Activated B cell treated with CpG ODN at 0.5 μM for 24 hours (primary cell): ENCODE measurements at regions of chr12 and their contacts with region 1.

Region 1: DNA sequence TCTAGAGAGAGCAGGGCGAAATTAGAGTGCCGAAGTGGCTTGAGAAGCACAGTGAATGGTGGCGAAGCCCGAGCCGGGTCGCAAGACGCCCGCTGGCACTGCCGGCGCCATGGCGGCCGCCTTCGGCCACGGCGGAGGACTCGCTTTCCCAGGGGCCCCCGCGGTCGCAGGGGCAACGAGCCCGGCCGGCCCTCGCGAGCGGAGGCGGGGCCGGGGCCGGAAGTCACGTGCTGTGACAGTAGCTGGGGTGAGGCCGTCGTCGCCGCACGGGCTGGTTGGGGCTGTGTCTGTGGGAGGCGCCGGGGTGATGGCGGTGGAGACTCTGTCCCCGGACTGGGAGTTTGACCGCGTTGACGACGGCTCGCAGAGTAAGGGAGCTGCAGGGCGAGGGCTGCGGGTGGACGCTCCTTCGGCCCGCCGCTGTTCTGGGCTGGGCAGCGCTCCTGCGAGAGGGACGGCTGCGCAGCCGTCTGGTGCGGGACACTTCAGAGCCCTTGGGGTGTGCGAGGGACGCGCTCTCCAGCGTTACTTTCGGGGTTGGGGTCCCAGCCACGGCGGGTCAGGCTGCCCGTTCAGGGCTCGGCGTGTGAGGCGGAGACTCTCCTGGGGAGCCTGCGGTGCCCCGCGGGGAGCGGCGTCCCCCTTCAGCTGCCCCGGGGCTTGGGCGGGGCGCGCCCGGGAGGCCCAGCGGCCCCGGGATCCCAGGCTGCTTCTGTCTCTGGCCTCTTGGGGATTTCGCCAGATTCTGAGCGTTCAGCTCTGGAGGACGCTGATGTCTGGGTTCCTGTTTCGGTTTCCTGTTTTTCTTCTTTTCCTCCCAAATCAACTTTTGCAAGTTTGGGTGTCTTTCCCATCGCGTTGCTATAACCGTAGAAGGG is at the start of gene WASHC4:
- DNase-seq: peak; percentile 95
- ATAC-seq: peak; percentile 89
- H3K4me3 Mint-ChIP-seq: peak within 1 kb of the TSS; percentile 96
- H3K27ac Mint-ChIP-seq: peak within 1 kb of the TSS; percentile 96
- H3K4me1 Mint-ChIP-seq: peaks cover 33% of the 10 kb centered on the region
- H3K27me3 Mint-ChIP-seq: no peaks in the 10 kb centered on the region
- CTCF ChIP-seq: no peak
- total RNA-seq, gene WASHC4: 105 and 128 TPM in 2 replicates

Region 2: DNA sequence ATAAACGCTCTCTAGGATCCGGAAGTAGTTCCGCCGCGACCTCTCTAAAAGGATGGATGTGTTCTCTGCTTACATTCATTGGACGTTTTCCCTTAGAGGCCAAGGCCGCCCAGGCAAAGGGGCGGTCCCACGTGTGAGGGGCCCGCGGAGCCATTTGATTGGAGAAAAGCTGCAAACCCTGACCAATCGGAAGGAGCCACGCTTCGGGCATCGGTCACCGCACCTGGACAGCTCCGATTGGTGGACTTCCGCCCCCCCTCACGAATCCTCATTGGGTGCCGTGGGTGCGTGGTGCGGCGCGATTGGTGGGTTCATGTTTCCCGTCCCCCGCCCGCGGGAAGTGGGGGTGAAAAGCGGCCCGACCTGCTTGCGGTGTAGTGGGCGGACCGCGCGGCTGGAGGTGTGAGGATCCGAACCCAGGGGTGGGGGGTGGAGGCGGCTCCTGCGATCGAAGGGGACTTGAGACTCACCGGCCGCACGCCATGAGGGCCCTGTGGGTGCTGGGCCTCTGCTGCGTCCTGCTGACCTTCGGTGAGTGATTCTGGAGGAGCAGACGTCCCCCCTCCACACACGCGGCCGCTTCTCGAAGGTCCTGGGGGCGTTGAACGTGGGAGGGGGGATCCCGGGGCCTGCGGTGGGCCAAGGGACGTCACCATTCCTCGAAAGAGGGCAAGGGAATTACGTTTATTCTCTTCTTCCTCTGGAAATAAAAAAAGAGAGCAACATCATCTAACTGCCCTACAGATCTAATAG is 1177.5 kb before region 1 on chr12 and contains the start of gene HSP90B1:
- CTCF ChIA-PET with region 1: no interaction called
- POLR2A ChIA-PET with region 1: interaction called, 23 read pairs
- intact Hi-C with region 1: loop called (anchors 1 kb)
- DNase-seq: peak; percentile 95
- ATAC-seq: peak; percentile 69
- H3K4me3 Mint-ChIP-seq: peak within 1 kb of the TSS; percentile 89
- H3K27ac Mint-ChIP-seq: peak within 1 kb of the TSS; percentile 97
- H3K4me1 Mint-ChIP-seq: peaks cover 68% of the 10 kb centered on the region
- H3K27me3 Mint-ChIP-seq: no peaks in the 10 kb centered on the region
- CTCF ChIP-seq: no peak
- total RNA-seq, gene HSP90B1: 346 and 368 TPM in 2 replicates

Region 3: GRCh38 chr12:104215638-104216297 is 892.0 kb before region 1 on chr12 and contains the start of gene TXNRD1:
- CTCF ChIA-PET with region 1: no interaction called
- POLR2A ChIA-PET with region 1: no interaction called
- intact Hi-C with region 1: loop called (anchors 5 kb)
- DNase-seq: peak; percentile 82
- ATAC-seq: peak; percentile 93
- H3K4me3 Mint-ChIP-seq: peak within 1 kb of the TSS; percentile 79
- H3K27ac Mint-ChIP-seq: peak within 1 kb of the TSS; percentile 65
- H3K4me1 Mint-ChIP-seq: peaks cover 21% of the 10 kb centered on the region
- H3K27me3 Mint-ChIP-seq: peaks cover 6% of the 10 kb centered on the region
- CTCF ChIP-seq: no peak
- total RNA-seq, gene TXNRD1: 72.0 and 77.3 TPM in 2 replicates

Region 4: GRCh38 chr12:104680066-104680465 is 427.7 kb before region 1 on chr12:
- CTCF ChIA-PET with region 1: no interaction called
- POLR2A ChIA-PET with region 1: no interaction called
- intact Hi-C with region 1: loop called (anchors 1 kb)
- DNase-seq: no peak
- ATAC-seq: peak; percentile 64
- H3K4me3 Mint-ChIP-seq: no peak overlapping the region
- H3K27ac Mint-ChIP-seq: no peak overlapping the region
- H3K4me1 Mint-ChIP-seq: peaks cover 88% of the 10 kb centered on the region
- H3K27me3 Mint-ChIP-seq: no peaks in the 10 kb centered on the region
- CTCF ChIP-seq: no peak

Region 5: GRCh38 chr12:105084251-105085250 is 23.2 kb before region 1 on chr12 and contains the start of gene ALDH1L2:
- CTCF ChIA-PET with region 1: no interaction called
- POLR2A ChIA-PET with region 1: interaction called, 29 read pairs
- intact Hi-C with region 1: loop called (anchors 1 kb)
- DNase-seq: peak; percentile 56
- ATAC-seq: peak; percentile 96
- H3K4me3 Mint-ChIP-seq: peak within 1 kb of the TSS; percentile 86
- H3K27ac Mint-ChIP-seq: peak within 1 kb of the TSS; percentile 41
- H3K4me1 Mint-ChIP-seq: peaks cover 9% of the 10 kb centered on the region
- H3K27me3 Mint-ChIP-seq: peaks cover 10% of the 10 kb centered on the region
- CTCF ChIP-seq: no peak
- total RNA-seq, gene ALDH1L2: 5.2 and 6.5 TPM in 2 replicates

Region 6: GRCh38 chr12:105235732-105236476 is 128.2 kb after region 1 on chr12 and contains the start of gene APPL2:
- CTCF ChIA-PET with region 1: no interaction called
- POLR2A ChIA-PET with region 1: interaction called, 6 read pairs
- intact Hi-C with region 1: loop called (anchors 1 kb)
- DNase-seq: peak; percentile 79
- ATAC-seq: peak; percentile 82
- H3K4me3 Mint-ChIP-seq: peak within 1 kb of the TSS; percentile 88
- H3K27ac Mint-ChIP-seq: peak within 1 kb of the TSS; percentile 91
- H3K4me1 Mint-ChIP-seq: peaks cover 39% of the 10 kb centered on the region
- H3K27me3 Mint-ChIP-seq: no peaks in the 10 kb centered on the region
- CTCF ChIP-seq: no peak
- total RNA-seq, gene APPL2: 22.0 and 30.7 TPM in 2 replicates